ENCODE measurements at regions of chr15 and their contacts with region 1.

Region 1: GRCh38 chr15:44682211-44682610 is 18.7 kb upstream of the SPG11 start:
- DNase-seq: no peak
- H3K4me3 ChIP-seq: no peak overlapping the region
- H3K27ac ChIP-seq: no peak overlapping the region
- H3K4me1 ChIP-seq: peaks cover 9% of the 10 kb centered on the region
- CTCF ChIP-seq: no peak

Region 2: DNA sequence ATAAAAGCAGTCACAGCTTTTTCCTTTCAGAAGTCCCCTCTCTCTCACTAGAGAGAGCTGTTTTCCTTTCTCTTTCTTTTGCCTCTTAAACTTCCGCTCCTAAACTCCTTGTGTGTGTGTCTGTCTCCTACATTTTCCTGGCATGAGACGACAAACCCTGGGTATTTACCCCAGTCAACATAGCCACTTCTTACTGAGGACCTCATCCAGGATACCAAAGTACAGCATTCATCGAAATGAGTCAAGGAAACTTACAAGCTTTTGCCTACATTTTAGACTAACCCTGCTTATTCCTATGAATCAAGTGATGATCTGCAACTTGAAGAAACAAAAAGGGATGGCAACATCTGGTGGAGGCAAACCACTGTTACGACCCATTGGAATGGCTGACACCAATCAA is 12.2 kb after region 1 on chr15:
- CTCF ChIA-PET with region 1: no interaction called
- POLR2A ChIA-PET with region 1: interaction called, 11 read pairs
- intact Hi-C with region 1: no loop called
- DNase-seq: no peak
- H3K4me3 ChIP-seq: no peak overlapping the region
- H3K27ac ChIP-seq: no peak overlapping the region
- H3K4me1 ChIP-seq: no peaks in the 10 kb centered on the region
- CTCF ChIP-seq: no peak

Measured in OCI-LY7 (cell line).